Natural killer cell (primary cell): ENCODE measurements at regions of chr9 and their contacts with region 1.

Region 1: GRCh38 chr9:36023260-36024048 is 13.3 kb upstream of the RECK start:
- DNase-seq: peak; percentile 40 to 85
- ATAC-seq: peak; percentile 68 to 76 (median 74)
- H3K4me3 ChIP-seq: no peak overlapping the region
- H3K4me3 Mint-ChIP-seq: no peak overlapping the region
- H3K27ac ChIP-seq: no peak overlapping the region
- H3K27ac Mint-ChIP-seq: no peak overlapping the region
- H3K4me1 ChIP-seq: no peaks in the 10 kb centered on the region
- H3K4me1 Mint-ChIP-seq: no peaks in the 10 kb centered on the region
- H3K27me3 ChIP-seq: no peaks in the 10 kb centered on the region
- H3K27me3 Mint-ChIP-seq: peaks cover 0 to 9% of the 10 kb centered on the region in 2 donors
- CTCF ChIP-seq: peak; percentile 88

Region 2: GRCh38 chr9:35954942-35955546 is 68.4 kb before region 1 on chr9:
- intact Hi-C with region 1: loop called (anchors 2 kb)
- DNase-seq: peak in 1 of 2 donors; percentile 84
- ATAC-seq: peak; percentile 73 to 83 (median 78)
- H3K4me3 ChIP-seq: no peak overlapping the region
- H3K4me3 Mint-ChIP-seq: no peak overlapping the region
- H3K27ac ChIP-seq: no peak overlapping the region
- H3K27ac Mint-ChIP-seq: no peak overlapping the region
- H3K4me1 ChIP-seq: no peaks in the 10 kb centered on the region
- H3K4me1 Mint-ChIP-seq: no peaks in the 10 kb centered on the region
- H3K27me3 ChIP-seq: peaks cover 2% of the 10 kb centered on the region
- H3K27me3 Mint-ChIP-seq: peaks cover 28 to 40% of the 10 kb centered on the region in 2 donors
- CTCF ChIP-seq: peak; percentile 81

Region 3: DNA sequence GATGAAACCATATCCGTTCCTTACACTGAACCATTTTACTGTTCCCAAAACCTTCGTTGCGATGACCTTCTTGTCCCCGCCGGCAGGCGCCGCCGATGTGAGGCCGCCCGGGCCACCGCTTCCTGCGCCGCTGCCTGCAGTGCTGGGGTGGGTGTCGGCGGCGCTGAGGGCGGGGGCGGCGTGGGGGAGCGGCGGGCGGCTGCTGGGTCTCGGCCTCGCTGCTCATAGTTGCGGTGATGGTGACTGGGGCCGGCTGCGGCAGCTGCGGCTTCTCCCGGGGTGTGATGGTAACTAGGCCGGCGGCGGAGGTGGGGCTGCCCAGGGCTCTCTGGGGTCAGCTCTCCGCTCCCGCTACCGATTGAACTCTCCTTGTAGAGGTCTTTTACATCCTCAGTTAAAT is 51.4 kb before region 1 on chr9:
- intact Hi-C with region 1: no loop called
- DNase-seq: peak; percentile 26 to 38
- ATAC-seq: peak; percentile 67 to 97 (median 72)
- H3K4me3 ChIP-seq: no peak overlapping the region
- H3K4me3 Mint-ChIP-seq: peak overlapping the region; percentile 69
- H3K27ac ChIP-seq: no peak overlapping the region
- H3K27ac Mint-ChIP-seq: no peak overlapping the region
- H3K4me1 ChIP-seq: no peaks in the 10 kb centered on the region
- H3K4me1 Mint-ChIP-seq: peaks cover 15 to 16% of the 10 kb centered on the region in 2 donors
- H3K27me3 ChIP-seq: peaks cover 19% of the 10 kb centered on the region
- H3K27me3 Mint-ChIP-seq: peaks cover 54 to 90% of the 10 kb centered on the region in 2 donors
- CTCF ChIP-seq: no peak